SK-N-SH (cell line): ENCODE measurements at regions of chr5 and their contacts with region 1.

Region 1: GRCh38 chr5:175534070-175534932 is 55.9 kb downstream of the SFXN1 start:
- DNase-seq: peak; percentile 90
- H3K4me3 ChIP-seq: peak overlapping the region; percentile 17 to 46; a peak in 2 of 4 replicates
- H3K27ac ChIP-seq: no peak overlapping the region; a peak in 1 of 4 replicates
- H3K4me1 ChIP-seq: peaks cover 0 to 15% of the 10 kb centered on the region in 2 experiments; a peak in 2 of 4 replicates
- H3K27me3 ChIP-seq: no peaks in the 10 kb centered on the region
- CTCF ChIP-seq: peak; percentile 85
- EP300 ChIP-seq: no peak
- RAD21 ChIP-seq: peak; percentile 97

Region 2: DNA sequence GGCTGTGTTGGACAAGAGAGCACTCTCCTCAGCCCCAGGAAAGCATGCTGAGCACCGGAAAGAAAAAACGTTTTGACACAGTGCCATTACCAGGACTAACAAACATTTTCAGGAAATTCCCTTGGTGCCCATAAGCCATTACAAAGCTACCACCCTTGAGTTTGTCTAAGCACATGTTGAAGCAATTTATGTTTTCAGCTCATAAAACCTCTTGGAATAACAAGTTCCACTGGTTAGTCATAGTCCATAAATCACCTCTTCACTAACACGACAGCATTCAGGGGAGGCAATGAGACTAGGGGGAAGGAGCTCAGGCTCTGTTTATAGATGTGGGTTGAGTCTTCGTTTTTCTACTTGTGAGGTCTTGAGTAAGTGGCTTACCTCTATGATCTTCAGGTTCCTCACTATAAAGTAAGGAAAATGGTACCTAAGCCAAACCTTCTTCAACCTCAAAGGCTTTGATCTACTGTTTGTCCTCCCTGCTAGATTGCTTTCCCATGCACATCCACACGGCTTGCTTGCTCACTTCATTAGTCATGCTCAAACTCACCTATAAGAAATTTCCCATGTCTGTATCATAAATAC is 155.8 kb before region 1 on chr5:
- CTCF ChIA-PET with region 1: no interaction called
- POLR2A ChIA-PET with region 1: no interaction called
- DNase-seq: no peak
- H3K4me3 ChIP-seq: no peak overlapping the region
- H3K27ac ChIP-seq: no peak overlapping the region
- H3K4me1 ChIP-seq: no peaks in the 10 kb centered on the region
- H3K27me3 ChIP-seq: no peaks in the 10 kb centered on the region
- CTCF ChIP-seq: no peak
- EP300 ChIP-seq: no peak
- RAD21 ChIP-seq: no peak

Region 3: DNA sequence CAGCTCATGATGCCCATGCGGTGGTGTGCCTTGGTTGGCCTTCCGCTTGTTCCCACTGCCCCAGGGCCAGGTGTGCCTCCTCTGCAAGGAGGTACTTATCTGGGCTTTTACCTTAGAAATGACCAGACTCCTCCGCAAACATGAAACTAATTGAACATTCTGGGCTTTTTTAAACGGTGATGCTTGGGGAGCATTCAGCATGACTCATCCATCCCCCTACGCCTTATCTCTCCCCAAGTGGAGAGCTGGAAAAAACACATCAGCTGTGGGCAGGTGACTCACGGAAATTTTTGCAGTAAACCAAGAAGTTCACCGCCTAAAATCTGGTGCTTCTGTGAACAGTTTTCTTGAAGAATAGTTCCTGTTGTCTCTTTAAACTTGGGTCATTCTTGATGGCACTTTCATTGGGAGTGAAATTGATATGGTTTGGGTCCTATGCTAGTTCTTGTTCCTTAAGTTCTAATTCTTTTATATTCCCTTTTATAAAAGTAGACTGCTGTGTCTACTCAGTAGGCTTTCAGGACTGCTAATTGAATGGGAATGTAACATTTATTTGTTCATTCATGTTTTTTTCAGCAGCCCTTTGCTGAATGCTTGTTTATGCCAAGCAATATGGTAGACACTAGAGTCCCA is 16.4 kb before region 1 on chr5:
- CTCF ChIA-PET with region 1: interaction called, 51 read pairs
- POLR2A ChIA-PET with region 1: no interaction called
- DNase-seq: no peak
- H3K4me3 ChIP-seq: no peak overlapping the region; a peak in 1 of 4 replicates
- H3K27ac ChIP-seq: peak overlapping the region in 1 of 2 experiments; percentile 30; a peak in 1 of 4 replicates
- H3K4me1 ChIP-seq: no peaks in the 10 kb centered on the region; a peak in 1 of 4 replicates
- H3K27me3 ChIP-seq: no peaks in the 10 kb centered on the region
- CTCF ChIP-seq: no peak
- EP300 ChIP-seq: no peak; a peak in 1 of 4 replicates
- RAD21 ChIP-seq: no peak

Region 4: GRCh38 chr5:175567954-175568353 is 33.7 kb after region 1 on chr5:
- CTCF ChIA-PET with region 1: interaction called, 28 read pairs
- POLR2A ChIA-PET with region 1: interaction called, 4 read pairs
- DNase-seq: no peak
- H3K4me3 ChIP-seq: no peak overlapping the region
- H3K27ac ChIP-seq: no peak overlapping the region
- H3K4me1 ChIP-seq: no peaks in the 10 kb centered on the region
- H3K27me3 ChIP-seq: no peaks in the 10 kb centered on the region
- CTCF ChIP-seq: no peak
- EP300 ChIP-seq: no peak
- RAD21 ChIP-seq: peak; percentile 53

Region 5: DNA sequence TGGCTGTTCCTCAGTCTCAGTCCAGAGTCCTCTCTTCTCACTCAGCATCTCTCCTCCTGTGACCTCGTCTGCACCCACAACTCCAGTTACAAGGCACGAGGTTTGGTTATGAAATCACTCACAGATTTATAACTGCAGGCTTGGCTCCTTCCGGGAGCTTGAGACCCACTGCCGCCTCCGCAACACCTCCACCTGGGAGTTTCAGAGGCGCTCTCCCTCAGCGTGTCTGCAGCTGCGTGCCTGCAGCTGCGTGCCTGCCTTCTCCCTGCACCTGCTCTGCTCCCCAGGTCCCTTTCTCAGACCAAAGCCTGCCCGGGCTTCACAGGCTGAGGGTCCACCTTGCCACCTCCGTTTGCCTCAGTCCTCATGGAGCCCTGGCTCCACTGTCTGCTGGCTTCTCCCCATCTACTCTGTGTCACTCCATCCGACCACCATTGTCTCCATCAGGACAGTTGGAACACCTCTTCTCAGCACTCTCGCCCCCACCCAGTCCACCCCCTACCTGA is 175.0 kb after region 1 on chr5:
- CTCF ChIA-PET with region 1: interaction called, 57 read pairs
- POLR2A ChIA-PET with region 1: no interaction called
- DNase-seq: no peak
- H3K4me3 ChIP-seq: no peak overlapping the region
- H3K27ac ChIP-seq: no peak overlapping the region
- H3K4me1 ChIP-seq: peaks cover 0 to 9% of the 10 kb centered on the region in 2 experiments; a peak in 1 of 4 replicates
- H3K27me3 ChIP-seq: no peaks in the 10 kb centered on the region
- CTCF ChIP-seq: no peak
- EP300 ChIP-seq: no peak
- RAD21 ChIP-seq: no peak

Region 6: DNA sequence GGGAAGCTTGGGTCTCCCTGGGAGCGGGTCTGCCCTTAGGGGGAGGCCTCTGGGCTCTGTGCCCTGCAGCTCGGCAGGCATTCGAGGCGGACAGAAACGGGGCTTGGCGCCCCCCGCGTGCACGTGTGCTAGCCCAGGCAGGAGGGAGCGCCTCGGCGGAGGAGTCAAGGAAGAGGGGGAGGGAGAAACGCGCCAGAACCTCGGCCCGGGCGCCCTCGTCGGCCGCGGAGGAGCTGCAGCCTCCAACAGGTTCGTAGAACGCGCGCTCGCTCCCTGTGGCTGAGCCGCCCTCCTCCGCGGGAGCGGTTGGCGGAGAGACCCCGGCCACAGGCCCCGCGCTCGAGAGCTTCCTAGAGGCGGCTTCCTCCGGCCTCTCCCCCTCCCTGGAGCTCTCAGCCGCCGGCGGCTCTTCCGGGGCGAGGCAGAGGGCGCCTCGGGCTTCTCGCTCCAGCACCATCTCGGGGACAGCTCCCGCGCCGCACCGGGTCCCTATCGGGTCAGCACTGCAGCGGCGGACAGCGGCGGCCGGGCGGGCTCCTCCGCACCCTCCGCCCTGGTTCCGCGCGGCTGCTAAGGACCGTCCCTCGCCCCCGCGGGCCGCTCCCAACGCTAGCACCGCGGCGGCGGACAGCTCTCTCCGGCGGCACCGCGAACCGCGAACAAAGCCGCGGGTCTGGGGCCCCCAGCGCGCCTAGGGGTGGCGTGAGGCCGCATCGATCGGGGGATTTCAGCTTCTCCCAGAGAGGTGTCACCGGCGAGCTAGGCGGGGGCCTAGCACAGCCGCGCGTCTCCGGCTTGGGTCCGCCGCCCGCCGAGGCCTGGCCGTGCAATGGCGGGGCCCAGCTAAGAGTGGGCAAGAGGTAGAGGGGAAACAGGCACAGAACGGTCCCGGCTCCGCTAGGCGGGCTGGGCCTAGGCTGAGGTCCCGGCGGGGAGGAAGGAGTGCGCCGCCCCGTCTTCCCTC is 262.5 kb after region 1 on chr5:
- CTCF ChIA-PET with region 1: interaction called, 13 read pairs
- POLR2A ChIA-PET with region 1: no interaction called
- DNase-seq: peak; percentile 80
- H3K4me3 ChIP-seq: peak overlapping the region; percentile 47 to 57
- H3K27ac ChIP-seq: peak overlapping the region in 1 of 2 experiments; percentile 92; a peak in 2 of 4 replicates
- H3K4me1 ChIP-seq: peaks cover 0 to 27% of the 10 kb centered on the region in 2 experiments; a peak in 2 of 4 replicates
- H3K27me3 ChIP-seq: peaks cover 6% of the 10 kb centered on the region; the same call in 1 of the 2 replicates
- CTCF ChIP-seq: no peak
- EP300 ChIP-seq: no peak
- RAD21 ChIP-seq: no peak